Gastrocnemius medialis (tissue), 4 donors: ENCODE measurements at regions of chr6 and their contacts with region 1.

Region 1: DNA sequence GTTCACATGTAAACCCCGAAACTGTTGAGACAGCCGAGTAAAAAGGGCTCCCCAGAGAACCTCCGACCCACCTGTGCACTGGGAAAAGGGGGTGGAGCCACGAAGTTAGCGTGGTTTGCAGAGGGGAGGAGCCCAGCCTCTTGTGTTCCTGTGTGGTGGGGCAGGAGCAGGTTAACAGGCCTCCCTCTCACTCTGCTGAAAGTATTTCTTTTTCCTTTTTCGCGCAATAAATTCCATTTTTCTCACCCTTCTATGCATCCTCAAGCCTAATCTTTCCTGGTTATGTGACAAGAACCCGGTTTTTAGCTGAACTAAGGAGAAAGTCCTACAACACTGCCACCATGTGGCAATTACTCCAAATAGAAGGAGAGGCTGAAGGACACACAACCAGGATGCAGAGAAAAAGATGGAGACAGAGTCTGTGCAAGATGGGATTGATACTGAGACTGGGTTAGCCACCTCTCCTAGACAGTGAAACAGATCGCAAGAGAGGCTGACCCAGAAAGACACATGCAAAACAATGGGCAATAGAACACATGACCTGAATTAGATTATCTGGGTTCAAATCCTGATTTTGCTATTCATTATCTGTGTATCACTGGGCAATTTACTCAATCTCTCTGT is 168.7 kb upstream of the PRSS16 start:
- DNase-seq: no peak
- ATAC-seq: peak in 1 of 2 donors; percentile 47
- H3K4me3 ChIP-seq: no peak overlapping the region
- H3K27ac ChIP-seq: no peak overlapping the region
- H3K4me1 ChIP-seq: no peaks in the 10 kb centered on the region
- H3K27me3 ChIP-seq: peaks cover 0 to 10% (median 3%) of the 10 kb centered on the region in 3 donors
- CTCF ChIP-seq: peak; percentile 27 to 61 (median 50)
- POLR2A ChIP-seq: no peak

Region 2: GRCh38 chr6:26327450-26328264 is 751.2 kb before region 1 on chr6:
- in situ Hi-C with region 1: loop called in 2 of 4 experiments (anchors 25 kb)
- intact Hi-C with region 1: no loop called
- DNase-seq: no peak
- ATAC-seq: no peak
- H3K4me3 ChIP-seq: peak overlapping the region in 1 of 4 donors; percentile 15
- H3K27ac ChIP-seq: no peak overlapping the region
- H3K4me1 ChIP-seq: no peaks in the 10 kb centered on the region
- H3K27me3 ChIP-seq: peaks cover 56 to 70% (median 56%) of the 10 kb centered on the region in 3 donors
- CTCF ChIP-seq: no peak
- POLR2A ChIP-seq: no peak

Region 3: GRCh38 chr6:26342106-26343004 is 736.5 kb before region 1 on chr6:
- in situ Hi-C with region 1: loop called in 2 of 4 experiments (anchors 25 kb)
- intact Hi-C with region 1: loop called (anchors 2 kb)
- DNase-seq: no peak
- ATAC-seq: no peak
- H3K4me3 ChIP-seq: no peak overlapping the region
- H3K27ac ChIP-seq: no peak overlapping the region
- H3K4me1 ChIP-seq: no peaks in the 10 kb centered on the region
- H3K27me3 ChIP-seq: peaks cover 4 to 16% (median 8%) of the 10 kb centered on the region in 3 donors
- CTCF ChIP-seq: no peak
- POLR2A ChIP-seq: no peak

Region 4: DNA sequence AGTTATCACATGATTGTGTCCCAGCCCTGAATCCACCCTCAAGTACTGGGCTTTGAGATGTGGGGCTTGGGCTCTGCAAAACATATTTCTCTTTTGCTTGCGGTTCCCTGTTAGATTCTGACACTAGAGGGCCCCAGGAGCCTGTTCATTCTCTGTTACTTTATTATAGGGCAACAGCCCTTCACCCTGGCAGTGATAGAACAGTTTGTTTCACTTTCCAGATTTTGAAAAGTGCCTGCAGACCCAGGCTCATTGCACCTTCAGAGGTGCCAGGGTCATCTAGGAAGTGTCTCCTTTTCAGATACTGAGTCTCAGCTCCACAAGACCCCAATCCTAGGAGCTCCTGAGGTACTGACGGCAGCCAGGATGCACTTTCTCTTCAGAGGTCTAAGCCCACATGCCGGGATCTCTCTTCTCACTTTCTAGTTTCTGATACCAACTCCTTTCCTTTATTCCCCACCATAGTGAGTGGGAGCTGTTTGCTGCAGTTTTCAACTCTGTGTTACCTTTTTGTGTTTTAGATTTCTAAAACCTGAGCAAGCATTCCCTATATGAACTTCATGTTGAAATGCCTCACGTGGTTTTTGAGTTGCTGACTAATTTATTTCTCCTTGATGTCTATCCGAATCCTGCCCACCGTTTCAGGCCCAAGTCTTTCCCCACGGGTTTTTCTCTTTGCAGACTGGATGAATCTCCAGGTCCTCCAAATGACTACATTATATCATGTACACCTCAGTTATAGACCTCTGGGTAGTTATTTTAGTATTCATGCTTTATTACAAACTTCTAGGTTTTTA is 471.2 kb before region 1 on chr6:
- in situ Hi-C with region 1: loop called in 2 of 4 experiments (anchors 10 kb)
- intact Hi-C with region 1: loop called (anchors 2 kb)
- DNase-seq: no peak
- ATAC-seq: peak in 1 of 2 donors; percentile 53
- H3K4me3 ChIP-seq: peak overlapping the region in 1 of 4 donors; percentile 4
- H3K27ac ChIP-seq: no peak overlapping the region
- H3K4me1 ChIP-seq: no peaks in the 10 kb centered on the region
- H3K27me3 ChIP-seq: peaks cover 3 to 6% (median 4%) of the 10 kb centered on the region in 3 donors
- CTCF ChIP-seq: peak; percentile 6 to 56 (median 38)
- POLR2A ChIP-seq: no peak

Region 5: DNA sequence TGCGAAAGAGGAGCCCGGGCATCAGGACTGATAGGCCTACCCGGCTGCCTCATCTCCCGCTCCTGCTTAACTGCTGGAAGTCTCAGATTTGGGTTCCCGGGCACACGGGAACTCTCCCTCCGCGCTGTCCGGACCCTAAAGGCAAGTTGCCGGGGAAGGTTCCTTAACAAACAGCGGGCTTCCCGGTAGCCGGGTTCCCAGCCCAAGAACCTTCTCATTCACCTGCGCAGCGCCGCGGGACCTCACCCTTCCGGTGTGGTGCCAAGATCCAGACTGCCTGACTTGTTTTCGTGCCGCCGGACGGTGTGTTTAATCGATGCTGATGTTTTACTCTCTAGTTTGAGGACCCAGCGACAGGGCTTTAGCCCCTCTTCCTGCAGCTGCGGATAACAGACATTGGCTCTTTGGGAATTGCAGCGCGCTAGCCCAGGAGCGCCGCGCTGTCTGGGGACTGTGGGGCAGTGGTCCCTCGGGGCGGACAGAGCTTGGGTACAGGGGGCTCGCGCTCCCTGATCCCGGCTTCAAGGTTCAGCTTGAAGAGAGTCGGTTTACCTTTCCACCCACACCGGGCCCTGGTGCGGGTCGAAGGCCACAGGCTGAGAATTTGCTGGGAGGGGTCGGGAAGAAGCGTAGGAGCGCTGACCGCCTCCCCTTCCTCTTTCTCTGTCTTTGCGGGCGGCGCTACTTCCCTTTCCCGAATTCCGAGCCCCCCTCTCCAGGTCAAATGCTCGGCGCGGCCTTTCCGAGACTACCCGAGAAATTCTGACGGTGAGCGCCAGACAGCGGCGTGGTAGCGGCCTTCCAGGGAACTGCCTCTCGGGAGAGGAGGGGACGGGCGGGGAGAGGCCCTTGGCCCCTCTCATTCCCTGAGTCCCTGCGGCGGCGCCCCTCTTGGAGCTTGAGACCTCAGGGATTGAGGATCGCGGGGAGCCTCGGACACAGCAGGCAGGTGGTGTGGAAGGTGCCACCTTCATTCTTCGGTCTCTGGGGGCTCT is 464.9 kb before region 1 on chr6:
- in situ Hi-C with region 1: loop called in 2 of 4 experiments (anchors 10 kb)
- intact Hi-C with region 1: no loop called
- DNase-seq: no peak
- ATAC-seq: no peak
- H3K4me3 ChIP-seq: peak overlapping the region; percentile 14 to 43 (median 38)
- H3K27ac ChIP-seq: no peak overlapping the region
- H3K4me1 ChIP-seq: peaks cover 0 to 10% of the 10 kb centered on the region in 2 donors
- H3K27me3 ChIP-seq: peaks cover 35 to 48% (median 47%) of the 10 kb centered on the region in 3 donors
- CTCF ChIP-seq: no peak
- POLR2A ChIP-seq: no peak